Cardiac septum (tissue), 1 donor: ENCODE measurements at regions of chr15 and their contacts with region 1.

Region 1: GRCh38 chr15:85707519-85708338 is 87.0 kb downstream of the KLHL25 start:
- DNase-seq: no peak

Region 2: GRCh38 chr15:85624291-85624801 is 83.4 kb before region 1 on chr15:
- intact Hi-C with region 1: loop called (anchors 5 kb)
- DNase-seq: no peak